Breast epithelium (tissue), 4 donors: ENCODE measurements at regions of chr12 and their contacts with region 1.

Region 1: DNA sequence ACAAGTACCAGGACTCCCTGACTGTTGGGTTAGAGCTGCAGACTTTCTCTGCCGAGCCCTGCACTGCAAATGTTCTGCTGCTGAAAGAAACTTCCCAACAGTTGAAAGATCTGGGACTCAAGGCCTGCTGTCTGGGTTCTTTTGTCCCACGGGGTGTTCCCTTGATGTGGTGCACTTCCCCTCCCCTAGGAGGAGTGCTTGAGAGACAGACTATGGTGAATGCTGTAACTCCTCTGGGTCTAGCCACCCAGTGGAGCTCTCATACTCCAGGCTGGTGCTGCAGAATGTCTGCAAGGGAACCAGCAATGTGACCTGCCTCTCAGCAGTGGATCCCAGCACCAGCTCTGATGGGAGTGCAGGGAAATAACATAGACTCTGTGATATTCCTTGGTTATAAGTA is 129.2 kb upstream of the SLCO1B1 start:
- DNase-seq: no peak
- H3K4me3 ChIP-seq: no peak overlapping the region
- H3K27ac ChIP-seq: no peak overlapping the region
- H3K4me1 ChIP-seq: no peaks in the 10 kb centered on the region
- H3K27me3 ChIP-seq: no peaks in the 10 kb centered on the region
- CTCF ChIP-seq: no peak
- POLR2A ChIP-seq: no peak

Region 2: GRCh38 chr12:20865873-20866272 is 135.9 kb before region 1 on chr12:
- intact Hi-C with region 1: loop called (anchors 2 kb)
- DNase-seq: no peak
- H3K4me3 ChIP-seq: no peak overlapping the region
- H3K27ac ChIP-seq: no peak overlapping the region
- H3K4me1 ChIP-seq: no peaks in the 10 kb centered on the region
- H3K27me3 ChIP-seq: no peaks in the 10 kb centered on the region
- CTCF ChIP-seq: no peak
- POLR2A ChIP-seq: no peak

Region 3: GRCh38 chr12:20950248-20950647 is 51.5 kb before region 1 on chr12:
- intact Hi-C with region 1: no loop called
- DNase-seq: no peak
- H3K4me3 ChIP-seq: no peak overlapping the region
- H3K27ac ChIP-seq: no peak overlapping the region
- H3K4me1 ChIP-seq: no peaks in the 10 kb centered on the region
- H3K27me3 ChIP-seq: no peaks in the 10 kb centered on the region
- CTCF ChIP-seq: peak in 1 of 3 donors; percentile 11
- POLR2A ChIP-seq: no peak

Region 4: GRCh38 chr12:21026302-21026701 is 24.5 kb after region 1 on chr12:
- intact Hi-C with region 1: no loop called
- DNase-seq: no peak
- H3K4me3 ChIP-seq: no peak overlapping the region
- H3K27ac ChIP-seq: no peak overlapping the region
- H3K4me1 ChIP-seq: no peaks in the 10 kb centered on the region
- H3K27me3 ChIP-seq: no peaks in the 10 kb centered on the region
- CTCF ChIP-seq: no peak
- POLR2A ChIP-seq: no peak